T-cell (primary cell): ENCODE measurements at regions of chr6 and their contacts with region 1.

Region 1: DNA sequence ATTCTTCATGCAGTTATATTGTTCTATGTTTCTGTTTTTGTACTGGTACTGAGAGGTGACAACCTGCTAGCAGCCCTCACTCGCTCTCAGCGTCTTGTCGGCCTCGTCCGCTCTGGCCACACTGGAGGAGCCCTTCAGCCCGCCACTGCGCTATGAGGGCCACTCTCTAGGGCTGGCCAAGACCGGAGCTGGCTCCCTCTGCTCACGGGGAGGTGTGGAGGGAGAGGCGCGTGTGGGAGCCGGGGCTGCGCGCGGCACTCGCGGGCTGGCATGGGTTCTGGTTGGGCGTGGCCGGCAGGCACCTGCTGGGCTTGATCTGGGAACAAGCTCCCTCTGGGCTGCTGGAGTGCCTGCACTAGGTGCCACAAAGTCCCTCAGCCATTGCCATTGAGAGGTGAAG is 1323.8 kb upstream of the EYS start:
- DNase-seq: no peak
- ATAC-seq: no peak
- H3K4me3 ChIP-seq: no peak overlapping the region
- H3K4me3 Mint-ChIP-seq: no peak overlapping the region
- H3K27ac ChIP-seq: no peak overlapping the region
- H3K27ac Mint-ChIP-seq: no peak overlapping the region
- H3K4me1 ChIP-seq: no peaks in the 10 kb centered on the region
- H3K4me1 Mint-ChIP-seq: no peaks in the 10 kb centered on the region
- H3K27me3 ChIP-seq: no peaks in the 10 kb centered on the region
- H3K27me3 Mint-ChIP-seq: no peaks in the 10 kb centered on the region

Region 2: DNA sequence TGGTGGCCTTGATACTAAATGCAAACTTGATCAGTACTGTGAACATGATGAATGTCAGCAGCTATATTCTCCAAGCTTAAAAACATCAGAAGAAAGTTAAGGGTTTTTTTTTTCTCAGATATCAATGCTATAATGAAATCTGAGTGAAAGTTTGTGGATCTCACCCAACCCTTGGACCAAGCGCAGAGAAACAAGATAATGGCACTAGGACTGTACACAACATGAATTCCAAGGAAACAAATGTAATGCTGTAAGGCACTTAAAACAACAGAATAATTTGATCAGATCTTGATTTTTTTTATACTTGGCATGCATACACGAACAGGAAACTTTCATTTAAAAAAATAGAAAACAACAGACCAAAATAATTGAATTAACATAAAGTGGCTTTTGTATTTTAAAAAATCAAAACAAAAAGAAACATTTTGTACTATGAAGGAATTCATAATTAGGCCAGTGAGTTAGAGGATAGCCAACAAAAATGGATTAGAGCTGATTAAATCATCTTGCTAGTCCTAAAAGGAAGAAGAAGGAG is 169.8 kb before region 1 on chr6:
- CTCF ChIA-PET with region 1: no interaction called
- POLR2A ChIA-PET with region 1: no interaction called
- DNase-seq: no peak
- ATAC-seq: no peak
- H3K4me3 ChIP-seq: no peak overlapping the region
- H3K4me3 Mint-ChIP-seq: no peak overlapping the region
- H3K27ac ChIP-seq: no peak overlapping the region
- H3K27ac Mint-ChIP-seq: no peak overlapping the region
- H3K4me1 ChIP-seq: no peaks in the 10 kb centered on the region
- H3K4me1 Mint-ChIP-seq: no peaks in the 10 kb centered on the region
- H3K27me3 ChIP-seq: no peaks in the 10 kb centered on the region
- H3K27me3 Mint-ChIP-seq: no peaks in the 10 kb centered on the region

Region 3: GRCh38 chr6:66993272-66993671 is 37.6 kb before region 1 on chr6:
- CTCF ChIA-PET with region 1: no interaction called
- POLR2A ChIA-PET with region 1: no interaction called
- DNase-seq: no peak
- ATAC-seq: no peak
- H3K4me3 ChIP-seq: no peak overlapping the region
- H3K4me3 Mint-ChIP-seq: no peak overlapping the region
- H3K27ac ChIP-seq: no peak overlapping the region
- H3K27ac Mint-ChIP-seq: no peak overlapping the region
- H3K4me1 ChIP-seq: no peaks in the 10 kb centered on the region
- H3K4me1 Mint-ChIP-seq: no peaks in the 10 kb centered on the region
- H3K27me3 ChIP-seq: no peaks in the 10 kb centered on the region
- H3K27me3 Mint-ChIP-seq: no peaks in the 10 kb centered on the region

Region 4: GRCh38 chr6:67045076-67045475 is 14.2 kb after region 1 on chr6:
- CTCF ChIA-PET with region 1: no interaction called
- POLR2A ChIA-PET with region 1: no interaction called
- DNase-seq: no peak
- ATAC-seq: no peak
- H3K4me3 ChIP-seq: no peak overlapping the region
- H3K4me3 Mint-ChIP-seq: no peak overlapping the region
- H3K27ac ChIP-seq: no peak overlapping the region
- H3K27ac Mint-ChIP-seq: no peak overlapping the region
- H3K4me1 ChIP-seq: no peaks in the 10 kb centered on the region
- H3K4me1 Mint-ChIP-seq: no peaks in the 10 kb centered on the region
- H3K27me3 ChIP-seq: no peaks in the 10 kb centered on the region
- H3K27me3 Mint-ChIP-seq: no peaks in the 10 kb centered on the region

Region 5: DNA sequence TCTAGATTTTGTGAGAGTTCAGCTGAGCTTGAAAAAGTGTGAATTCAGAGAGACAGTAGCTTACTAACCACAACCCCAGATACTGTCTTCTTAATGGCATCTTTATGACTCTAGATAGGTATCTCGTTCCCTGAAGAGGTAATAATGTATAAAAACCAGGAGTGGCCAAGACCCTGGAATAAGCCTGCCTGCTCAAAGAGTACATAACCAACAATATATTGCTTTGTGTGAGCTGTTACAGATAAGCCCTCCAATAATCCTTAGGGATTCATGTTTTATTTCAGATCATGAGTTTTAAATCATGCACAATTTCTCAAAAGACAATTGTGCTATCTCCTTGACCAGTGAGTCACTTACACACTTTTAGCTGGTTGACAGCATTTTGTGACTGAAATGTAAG is 1276.4 kb after region 1 on chr6:
- CTCF ChIA-PET with region 1: no interaction called
- POLR2A ChIA-PET with region 1: interaction called in 1 of 2 experiments, 10 read pairs
- DNase-seq: no peak
- ATAC-seq: no peak
- H3K4me3 ChIP-seq: no peak overlapping the region
- H3K4me3 Mint-ChIP-seq: no peak overlapping the region
- H3K27ac ChIP-seq: no peak overlapping the region
- H3K27ac Mint-ChIP-seq: no peak overlapping the region
- H3K4me1 ChIP-seq: no peaks in the 10 kb centered on the region
- H3K4me1 Mint-ChIP-seq: no peaks in the 10 kb centered on the region
- H3K27me3 ChIP-seq: no peaks in the 10 kb centered on the region
- H3K27me3 Mint-ChIP-seq: no peaks in the 10 kb centered on the region